ENCODE measurements at regions of chr12 and their contacts with region 1.

Region 1: DNA sequence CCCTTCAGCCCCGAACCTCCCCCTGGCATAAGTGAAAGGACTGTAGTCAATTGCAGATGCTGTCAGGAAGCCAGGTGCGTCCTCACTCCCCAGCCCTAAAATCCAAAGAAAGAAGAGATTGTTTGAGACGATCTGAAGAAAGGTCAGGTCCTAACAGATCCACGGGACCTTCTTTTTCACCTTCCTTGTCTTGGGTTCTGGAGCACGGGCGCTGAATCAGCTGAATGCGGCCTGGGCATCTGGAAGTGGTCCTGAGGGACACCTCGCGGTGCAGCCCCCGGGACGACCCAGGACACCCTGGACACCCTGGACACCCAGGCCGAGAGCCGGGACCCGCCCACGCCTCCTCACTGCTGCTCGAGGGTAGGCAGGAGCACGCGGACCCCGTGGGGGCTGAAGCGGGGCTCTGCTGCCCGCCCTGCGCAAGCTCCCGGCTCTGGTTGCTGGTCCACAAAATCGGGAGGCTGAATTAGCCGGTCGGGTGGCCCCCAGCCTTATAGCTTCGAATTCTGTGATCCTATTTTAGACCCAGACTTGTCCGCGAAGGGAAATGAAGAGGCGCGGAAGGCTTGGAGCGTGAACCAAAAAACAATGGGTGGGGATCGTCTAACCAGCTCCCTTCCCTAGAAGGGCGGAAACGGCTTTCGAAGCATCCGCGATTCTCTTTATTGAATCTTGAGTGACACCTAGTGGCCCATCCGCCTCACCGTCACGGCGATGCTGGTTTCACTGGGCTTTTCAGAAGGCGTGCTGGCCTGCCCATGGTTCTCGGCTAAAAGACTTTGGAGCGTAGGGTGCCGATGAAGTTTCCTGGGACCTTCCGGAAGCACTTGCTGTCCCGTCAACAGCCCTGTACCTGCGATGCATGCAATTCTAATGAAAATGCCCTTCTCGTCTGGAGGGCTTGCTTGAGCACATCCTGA is 46.4 kb upstream of the PLXNC1 start:
- DNase-seq: peak; percentile 61 to 86 (median 82)
- ATAC-seq: peak; percentile 91
- H3K4me3 ChIP-seq: peak overlapping the region; percentile 77
- H3K4me3 Mint-ChIP-seq: peak overlapping the region; percentile 88 to 95 (median 90)
- H3K27ac ChIP-seq: peak overlapping the region; percentile 69
- H3K27ac Mint-ChIP-seq: peak overlapping the region; percentile 30 to 86 (median 76)
- H3K4me1 ChIP-seq: peaks cover 0 to 13% of the 10 kb centered on the region in 2 donors
- H3K4me1 Mint-ChIP-seq: peaks cover 11 to 30% (median 25%) of the 10 kb centered on the region in 7 donors
- H3K27me3 ChIP-seq: no peaks in the 10 kb centered on the region
- H3K27me3 Mint-ChIP-seq: peaks cover 0 to 19% (median 10%) of the 10 kb centered on the region in 5 donors

Region 2: GRCh38 chr12:92987362-92987761 is 1114.6 kb before region 1 on chr12:
- CTCF ChIA-PET with region 1: interaction called, 18 read pairs
- POLR2A ChIA-PET with region 1: no interaction called
- intact Hi-C with region 1: loop called (anchors 1 kb)
- DNase-seq: peak in 7 of 9 donors; percentile 41 to 66 (median 56)
- ATAC-seq: peak; percentile 81
- H3K4me3 ChIP-seq: no peak overlapping the region
- H3K4me3 Mint-ChIP-seq: peak overlapping the region in 9 of 10 donors; percentile 18 to 80 (median 65)
- H3K27ac ChIP-seq: no peak overlapping the region
- H3K27ac Mint-ChIP-seq: peak overlapping the region in 5 of 9 donors; percentile 35 to 68 (median 59)
- H3K4me1 ChIP-seq: peaks cover 0 to 8% of the 10 kb centered on the region in 2 donors
- H3K4me1 Mint-ChIP-seq: peaks cover 5 to 13% (median 12%) of the 10 kb centered on the region in 7 donors
- H3K27me3 ChIP-seq: no peaks in the 10 kb centered on the region
- H3K27me3 Mint-ChIP-seq: peaks cover 0 to 5% (median 0%) of the 10 kb centered on the region in 5 donors

Region 3: DNA sequence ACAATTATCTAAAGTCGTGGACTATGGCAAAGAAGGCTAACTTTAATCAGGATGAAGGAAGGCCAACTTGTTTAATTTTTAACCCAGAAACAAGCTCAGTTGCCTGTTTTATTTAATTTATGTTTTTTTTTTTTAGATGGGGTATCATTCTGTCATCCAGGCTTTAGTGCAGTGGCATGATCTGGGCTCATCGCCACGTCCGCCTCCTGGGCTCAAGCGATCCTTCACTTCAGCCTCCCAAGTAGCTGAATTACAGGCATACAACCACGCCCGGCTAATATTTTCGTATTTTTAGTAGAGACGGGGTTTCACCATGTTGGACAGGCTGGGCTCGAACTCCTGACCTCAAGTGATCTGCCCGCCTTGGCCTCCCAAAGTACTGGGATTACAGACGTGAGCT is 704.6 kb before region 1 on chr12:
- CTCF ChIA-PET with region 1: no interaction called
- POLR2A ChIA-PET with region 1: no interaction called
- intact Hi-C with region 1: loop called in 1 of 2 experiments (anchors 5 kb)
- DNase-seq: no peak
- ATAC-seq: no peak
- H3K4me3 ChIP-seq: no peak overlapping the region
- H3K4me3 Mint-ChIP-seq: no peak overlapping the region
- H3K27ac ChIP-seq: no peak overlapping the region
- H3K27ac Mint-ChIP-seq: peak overlapping the region in 1 of 9 donors; percentile 25
- H3K4me1 ChIP-seq: no peaks in the 10 kb centered on the region
- H3K4me1 Mint-ChIP-seq: peaks cover 0 to 8% (median 5%) of the 10 kb centered on the region in 7 donors
- H3K27me3 ChIP-seq: no peaks in the 10 kb centered on the region
- H3K27me3 Mint-ChIP-seq: no peaks in the 10 kb centered on the region

Region 4: DNA sequence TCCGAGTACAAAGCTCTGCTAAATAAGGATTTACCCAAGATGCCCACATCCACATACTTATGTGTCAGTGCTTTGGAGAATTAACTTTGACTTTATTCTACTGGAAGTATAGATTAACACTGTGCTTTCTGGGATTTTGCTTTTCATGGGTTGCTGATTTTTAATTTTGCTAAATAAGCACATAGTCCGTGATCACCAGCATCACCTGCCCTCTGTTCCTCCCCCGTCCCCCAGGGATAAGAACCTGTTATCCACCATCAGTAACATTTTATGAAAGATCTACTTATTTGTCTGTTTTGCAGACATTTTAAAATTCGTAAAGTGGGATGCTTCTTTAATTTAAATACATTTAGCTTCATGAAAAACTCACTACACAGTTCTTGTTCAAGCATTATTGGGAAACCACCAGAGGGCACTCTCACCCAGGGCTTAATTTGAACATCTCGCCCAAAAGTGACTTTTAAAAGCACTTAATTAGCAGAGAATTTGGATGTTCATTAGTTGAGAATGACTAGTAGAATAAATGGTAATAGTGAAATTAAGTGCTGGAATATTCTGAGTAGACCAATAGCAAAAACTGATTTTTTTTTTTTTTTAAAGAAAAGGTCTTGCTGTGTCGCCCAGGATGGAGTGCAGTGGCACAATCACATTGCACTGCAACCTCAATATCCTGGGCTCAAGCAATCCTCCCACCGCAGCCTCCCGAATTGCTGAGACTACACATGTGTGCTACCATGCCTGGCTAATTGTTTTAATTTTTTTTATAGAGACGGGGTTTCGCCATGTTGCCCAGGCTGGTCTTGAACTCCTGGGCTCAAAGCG is 599.0 kb before region 1 on chr12:
- CTCF ChIA-PET with region 1: interaction called, 252 read pairs
- POLR2A ChIA-PET with region 1: interaction called, 20 read pairs
- intact Hi-C with region 1: loop called (anchors 1 kb)
- DNase-seq: peak; percentile 16 to 71 (median 54)
- ATAC-seq: peak; percentile 67
- H3K4me3 ChIP-seq: no peak overlapping the region
- H3K4me3 Mint-ChIP-seq: no peak overlapping the region
- H3K27ac ChIP-seq: no peak overlapping the region
- H3K27ac Mint-ChIP-seq: peak overlapping the region in 3 of 9 donors; percentile 36 to 69 (median 60)
- H3K4me1 ChIP-seq: no peaks in the 10 kb centered on the region
- H3K4me1 Mint-ChIP-seq: peaks cover 0 to 29% (median 0%) of the 10 kb centered on the region in 7 donors
- H3K27me3 ChIP-seq: no peaks in the 10 kb centered on the region
- H3K27me3 Mint-ChIP-seq: no peaks in the 10 kb centered on the region

Region 5: GRCh38 chr12:93537769-93538168 is 564.2 kb before region 1 on chr12:
- CTCF ChIA-PET with region 1: no interaction called
- POLR2A ChIA-PET with region 1: no interaction called
- intact Hi-C with region 1: no loop called
- DNase-seq: no peak
- ATAC-seq: no peak
- H3K4me3 ChIP-seq: no peak overlapping the region
- H3K4me3 Mint-ChIP-seq: no peak overlapping the region
- H3K27ac ChIP-seq: no peak overlapping the region
- H3K27ac Mint-ChIP-seq: no peak overlapping the region
- H3K4me1 ChIP-seq: peaks cover 0 to 5% of the 10 kb centered on the region in 2 donors
- H3K4me1 Mint-ChIP-seq: peaks cover 15 to 72% (median 44%) of the 10 kb centered on the region in 7 donors
- H3K27me3 ChIP-seq: no peaks in the 10 kb centered on the region
- H3K27me3 Mint-ChIP-seq: no peaks in the 10 kb centered on the region

Region 6: DNA sequence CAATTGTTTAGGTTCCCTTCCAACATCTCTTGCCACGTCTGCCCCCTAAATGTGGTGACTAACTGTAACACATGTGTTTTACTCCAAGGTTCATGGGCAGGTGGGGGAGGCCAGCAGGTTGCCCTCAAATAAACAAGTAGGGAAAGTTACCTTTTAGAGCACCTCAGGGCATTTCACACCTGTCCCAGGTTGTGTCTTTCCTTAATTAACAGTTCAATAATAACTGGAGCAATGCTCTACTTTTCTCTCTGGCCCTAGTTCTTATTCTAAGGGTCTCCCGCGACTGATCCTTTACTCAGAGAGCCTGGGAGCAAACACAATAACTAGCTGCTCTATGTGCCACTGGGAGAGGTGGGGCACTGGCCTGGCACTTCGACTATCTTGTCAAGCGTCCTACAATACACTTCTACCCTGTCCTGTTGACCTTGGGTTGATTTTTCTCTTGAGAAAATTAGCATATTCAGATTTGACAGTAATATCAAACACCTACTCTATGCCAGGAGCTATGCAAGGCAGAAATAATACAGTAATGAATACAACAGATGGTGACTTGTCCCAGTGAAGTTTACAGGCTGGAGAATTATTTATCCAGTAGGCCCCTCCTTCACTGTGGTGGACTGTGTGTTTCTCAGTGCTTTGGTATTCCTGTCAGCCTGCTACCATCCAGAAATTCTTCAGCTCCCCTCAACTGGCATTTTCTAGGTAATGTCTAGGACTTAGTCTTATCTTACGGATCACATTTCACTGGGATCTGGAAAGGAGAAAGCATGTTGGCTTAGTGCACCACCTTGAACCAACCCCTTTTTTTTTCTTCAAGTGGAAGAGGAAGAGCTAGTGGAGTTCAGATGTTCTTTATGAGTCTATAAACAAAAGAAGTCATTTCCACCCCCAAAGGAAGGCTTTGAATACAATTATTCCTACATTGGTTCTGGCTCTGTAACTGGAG is 222.2 kb before region 1 on chr12:
- CTCF ChIA-PET with region 1: no interaction called
- POLR2A ChIA-PET with region 1: no interaction called
- intact Hi-C with region 1: loop called in 1 of 2 experiments (anchors 2 kb)
- DNase-seq: no peak
- ATAC-seq: no peak
- H3K4me3 ChIP-seq: no peak overlapping the region
- H3K4me3 Mint-ChIP-seq: peak overlapping the region in 5 of 10 donors; percentile 5 to 71 (median 39)
- H3K27ac ChIP-seq: no peak overlapping the region
- H3K27ac Mint-ChIP-seq: peak overlapping the region in 8 of 9 donors; percentile 53 to 94 (median 72)
- H3K4me1 ChIP-seq: peaks cover 0 to 9% of the 10 kb centered on the region in 2 donors
- H3K4me1 Mint-ChIP-seq: peaks cover 7 to 39% (median 19%) of the 10 kb centered on the region in 7 donors
- H3K27me3 ChIP-seq: no peaks in the 10 kb centered on the region
- H3K27me3 Mint-ChIP-seq: peaks cover 0 to 3% (median 0%) of the 10 kb centered on the region in 5 donors

Region 7: DNA sequence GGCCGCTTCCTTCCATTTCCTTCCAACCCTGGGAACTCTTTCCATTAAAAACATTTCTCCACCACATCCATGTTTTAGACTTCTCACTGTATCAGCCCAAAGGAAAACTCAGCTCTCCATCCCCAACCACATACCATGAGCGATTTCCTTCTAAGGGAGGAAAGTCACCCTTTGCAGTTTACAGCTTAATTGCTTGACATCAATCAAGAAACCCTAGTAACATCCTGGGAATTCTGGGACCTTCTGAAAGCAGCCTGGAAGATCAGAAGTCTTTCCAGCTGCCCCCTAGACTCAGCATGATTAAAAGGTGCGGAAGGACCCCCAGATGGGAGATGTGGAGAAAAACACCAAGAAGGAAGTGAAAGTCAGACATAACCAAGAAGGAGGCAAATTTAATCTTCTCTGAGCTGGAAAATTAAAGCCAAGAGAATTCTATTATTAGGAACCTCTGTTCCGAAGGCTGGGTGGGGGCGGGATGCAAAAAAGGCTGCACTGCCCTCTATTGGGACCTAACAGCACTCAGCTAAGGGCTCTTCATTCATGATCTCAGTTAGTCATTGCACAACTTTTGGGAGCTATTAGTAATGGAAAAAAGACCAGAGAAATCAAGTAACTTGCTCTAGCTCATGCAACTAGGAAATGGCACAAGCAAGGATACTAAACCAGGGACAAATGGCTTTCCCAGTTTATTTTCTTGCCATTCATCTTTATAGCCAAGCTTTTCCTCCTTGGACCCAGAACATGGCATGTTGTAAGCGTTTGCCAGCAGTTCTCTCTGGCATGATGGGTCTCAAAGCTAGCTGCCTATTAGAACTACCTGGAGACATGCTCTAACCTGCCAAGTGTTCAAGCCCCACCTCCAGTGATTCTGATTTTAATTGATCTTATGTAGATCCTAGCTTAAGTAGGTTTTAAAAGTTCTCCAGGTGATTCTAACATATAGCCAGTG is 26.7 kb before region 1 on chr12:
- CTCF ChIA-PET with region 1: interaction called, 63 read pairs
- POLR2A ChIA-PET with region 1: interaction called, 3 read pairs
- intact Hi-C with region 1: loop called (anchors 1 to 2 kb)
- DNase-seq: peak in 1 of 9 donors; percentile 20
- ATAC-seq: peak; percentile 67
- H3K4me3 ChIP-seq: no peak overlapping the region
- H3K4me3 Mint-ChIP-seq: no peak overlapping the region
- H3K27ac ChIP-seq: no peak overlapping the region
- H3K27ac Mint-ChIP-seq: no peak overlapping the region
- H3K4me1 ChIP-seq: peaks cover 0 to 20% of the 10 kb centered on the region in 2 donors
- H3K4me1 Mint-ChIP-seq: peaks cover 18 to 67% (median 28%) of the 10 kb centered on the region in 7 donors
- H3K27me3 ChIP-seq: no peaks in the 10 kb centered on the region
- H3K27me3 Mint-ChIP-seq: peaks cover 0 to 6% (median 3%) of the 10 kb centered on the region in 5 donors